Caco-2 (cell line): ENCODE measurements at regions of chr10 and their contacts with region 1.

Region 1: GRCh38 chr10:15097011-15097812 is at the start of gene RPP38:
- DNase-seq: peak; percentile 98 to 100
- H3K4me3 ChIP-seq: peak within 1 kb of the TSS; percentile 89
- H3K4me3 Mint-ChIP-seq: peak within 1 kb of the TSS; percentile 100
- H3K27ac Mint-ChIP-seq: peak within 1 kb of the TSS; percentile 100
- H3K4me1 ChIP-seq: peaks cover 9% of the 10 kb centered on the region; the same call in 1 of the 2 replicates
- H3K4me1 Mint-ChIP-seq: peaks cover 20% of the 10 kb centered on the region
- H3K27me3 ChIP-seq: no peaks in the 10 kb centered on the region
- H3K27me3 Mint-ChIP-seq: peaks cover 1% of the 10 kb centered on the region
- CTCF ChIP-seq: no peak
- total RNA-seq, gene RPP38: 40.1 and 40.7 TPM in 2 replicates

Region 2: GRCh38 chr10:14959276-14960057 is 137.7 kb before region 1 on chr10 and contains the start of gene MEIG1:
- CTCF ChIA-PET with region 1: no interaction called
- POLR2A ChIA-PET with region 1: interaction called, 10 read pairs
- intact Hi-C with region 1: no loop called
- DNase-seq: peak; percentile 98 to 99
- H3K4me3 ChIP-seq: peak within 1 kb of the TSS; percentile 62
- H3K4me3 Mint-ChIP-seq: peak within 1 kb of the TSS; percentile 99
- H3K27ac Mint-ChIP-seq: peak within 1 kb of the TSS; percentile 100
- H3K4me1 ChIP-seq: peaks cover 9% of the 10 kb centered on the region
- H3K4me1 Mint-ChIP-seq: peaks cover 6% of the 10 kb centered on the region
- H3K27me3 ChIP-seq: no peaks in the 10 kb centered on the region
- H3K27me3 Mint-ChIP-seq: no peaks in the 10 kb centered on the region
- CTCF ChIP-seq: no peak
- total RNA-seq, gene MEIG1: not detected in 2 replicates

Region 3: GRCh38 chr10:15131330-15131729 is 34.1 kb after region 1 on chr10:
- CTCF ChIA-PET with region 1: no interaction called
- POLR2A ChIA-PET with region 1: no interaction called
- intact Hi-C with region 1: no loop called
- DNase-seq: no peak
- H3K4me3 ChIP-seq: no peak overlapping the region
- H3K4me3 Mint-ChIP-seq: no peak overlapping the region
- H3K27ac Mint-ChIP-seq: no peak overlapping the region
- H3K4me1 ChIP-seq: no peaks in the 10 kb centered on the region
- H3K4me1 Mint-ChIP-seq: no peaks in the 10 kb centered on the region
- H3K27me3 ChIP-seq: no peaks in the 10 kb centered on the region
- H3K27me3 Mint-ChIP-seq: no peaks in the 10 kb centered on the region
- CTCF ChIP-seq: no peak

Region 4: DNA sequence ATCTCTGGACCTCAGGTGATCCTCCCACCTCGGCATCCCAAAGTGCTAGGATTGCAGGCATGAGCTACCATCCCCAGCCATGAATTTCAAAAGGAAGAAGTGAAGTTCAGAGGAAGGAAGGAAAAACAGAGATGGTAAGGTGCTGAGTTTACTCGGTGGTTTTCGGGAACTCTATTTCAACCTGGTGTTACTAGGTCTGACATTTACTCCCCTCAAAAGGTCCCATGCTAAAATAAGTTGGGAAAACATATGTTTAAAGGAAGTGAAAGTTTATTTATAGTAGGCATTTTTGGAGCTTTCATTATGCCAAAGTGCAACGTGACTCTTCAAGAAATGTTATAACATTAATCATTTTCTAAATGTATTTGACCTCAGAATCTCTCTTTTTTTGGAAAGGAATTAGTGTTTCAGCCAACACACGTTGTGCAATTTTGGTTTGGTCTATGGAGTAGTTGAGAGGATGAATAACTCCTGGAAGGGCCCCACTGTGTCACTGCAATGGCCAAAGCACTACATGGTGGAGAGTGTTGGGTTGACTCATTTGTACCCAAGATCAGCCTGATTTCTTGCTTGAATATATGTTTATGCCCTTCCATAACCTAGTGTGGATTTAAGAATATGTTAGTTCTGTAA is 388.6 kb after region 1 on chr10:
- CTCF ChIA-PET with region 1: no interaction called
- POLR2A ChIA-PET with region 1: no interaction called
- intact Hi-C with region 1: no loop called
- DNase-seq: no peak
- H3K4me3 ChIP-seq: no peak overlapping the region
- H3K4me3 Mint-ChIP-seq: no peak overlapping the region
- H3K27ac Mint-ChIP-seq: no peak overlapping the region
- H3K4me1 ChIP-seq: peaks cover 4% of the 10 kb centered on the region; the same call in 1 of the 2 replicates
- H3K4me1 Mint-ChIP-seq: no peaks in the 10 kb centered on the region
- H3K27me3 ChIP-seq: no peaks in the 10 kb centered on the region
- H3K27me3 Mint-ChIP-seq: peaks cover 27% of the 10 kb centered on the region
- CTCF ChIP-seq: no peak